ENCODE measurements at regions of chr3 and their contacts with region 1.

Region 1: GRCh38 chr3:11060500-11061251 is 68.1 kb downstream of the SLC6A1 start:
- DNase-seq: peak; percentile 38 to 80
- H3K4me3 ChIP-seq: peak overlapping the region; percentile 25 to 42
- H3K27ac ChIP-seq: no peak overlapping the region
- H3K4me1 ChIP-seq: peaks cover 0 to 10% (median 7%) of the 10 kb centered on the region in 4 donors
- H3K27me3 ChIP-seq: peaks cover 0 to 29% of the 10 kb centered on the region in 2 donors
- CTCF ChIP-seq: peak; percentile 89 to 90

Region 2: DNA sequence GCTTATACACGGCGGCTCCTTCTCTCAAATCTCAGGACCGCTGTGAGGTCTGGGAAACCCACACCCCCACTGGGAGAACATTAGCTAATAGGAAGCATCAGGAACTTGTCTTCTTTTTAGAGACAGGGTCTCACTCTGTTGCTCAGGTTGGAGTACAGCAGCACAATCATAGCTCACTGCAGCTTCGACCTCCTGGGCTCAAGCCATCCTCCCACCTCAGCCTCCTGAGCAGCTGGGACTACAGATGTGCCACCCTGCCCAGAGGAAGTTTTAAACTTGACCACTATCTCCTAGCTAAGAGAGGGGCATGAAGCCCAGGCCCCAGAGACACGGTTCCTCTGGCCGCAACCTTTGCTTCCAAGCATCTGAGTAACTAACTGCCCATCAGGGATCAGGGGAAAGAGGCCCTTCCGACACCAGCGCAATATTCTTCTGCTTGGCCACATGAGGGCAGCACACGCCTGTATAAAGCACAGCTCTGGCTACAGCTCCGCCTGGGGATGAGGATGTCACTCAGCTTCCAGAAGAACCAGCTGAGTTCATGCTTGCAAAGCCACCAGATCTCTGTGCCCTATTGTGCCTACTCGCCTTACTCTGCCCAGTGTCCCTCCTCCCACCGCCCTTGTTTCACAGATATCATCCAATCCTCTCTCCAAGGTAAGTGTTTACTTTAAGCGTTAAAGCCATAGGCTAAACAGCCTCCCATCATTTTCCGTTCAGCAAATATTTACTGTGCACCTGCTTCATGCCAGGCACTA is 302.2 kb before region 1 on chr3:
- intact Hi-C with region 1: loop called (anchors 10 kb)
- DNase-seq: peak in 1 of 2 donors; percentile 65
- H3K4me3 ChIP-seq: no peak overlapping the region
- H3K27ac ChIP-seq: no peak overlapping the region
- H3K4me1 ChIP-seq: no peaks in the 10 kb centered on the region
- H3K27me3 ChIP-seq: peaks cover 0 to 49% of the 10 kb centered on the region in 2 donors
- CTCF ChIP-seq: peak; percentile 51 to 60

Region 3: DNA sequence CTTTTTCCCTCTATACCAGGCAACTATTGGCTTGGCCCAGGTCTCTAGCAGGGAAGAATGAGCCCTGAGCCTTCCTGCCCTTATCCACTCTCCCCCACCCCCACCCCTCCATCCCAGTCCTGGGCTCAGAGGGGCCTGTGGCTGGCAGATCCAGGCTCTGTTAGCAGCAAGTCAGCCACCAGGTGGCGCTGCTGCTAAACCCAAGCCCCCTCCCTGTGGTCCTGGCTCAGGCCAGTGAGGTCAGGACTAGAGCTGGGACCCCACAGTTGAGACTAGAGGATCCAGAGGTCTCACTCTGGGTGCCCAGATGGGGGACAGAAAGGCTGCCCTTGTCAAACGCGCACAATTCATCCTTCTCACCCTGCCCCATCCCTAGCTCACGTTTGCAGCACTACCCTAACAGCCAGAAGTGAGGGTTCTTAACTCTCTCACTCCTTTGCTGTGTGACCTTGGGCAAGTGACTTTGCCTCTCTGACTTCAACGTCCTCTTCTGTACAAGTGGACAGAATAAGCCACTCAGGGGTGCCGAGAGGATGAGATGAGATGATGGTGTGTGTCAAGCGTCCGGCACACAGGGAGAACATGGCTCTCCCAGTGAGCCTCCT is 114.9 kb before region 1 on chr3:
- intact Hi-C with region 1: loop called (anchors 2 kb)
- DNase-seq: peak in 1 of 2 donors; percentile 38
- H3K4me3 ChIP-seq: no peak overlapping the region
- H3K27ac ChIP-seq: no peak overlapping the region
- H3K4me1 ChIP-seq: no peaks in the 10 kb centered on the region
- H3K27me3 ChIP-seq: peaks cover 0 to 3% of the 10 kb centered on the region in 2 donors
- CTCF ChIP-seq: peak; percentile 69 to 78

Region 4: GRCh38 chr3:11221818-11222415 is 161.2 kb after region 1 on chr3:
- intact Hi-C with region 1: loop called (anchors 5 kb)
- DNase-seq: no peak
- H3K4me3 ChIP-seq: no peak overlapping the region
- H3K27ac ChIP-seq: peak overlapping the region in 1 of 2 donors; percentile 13
- H3K4me1 ChIP-seq: peaks cover 0 to 42% (median 8%) of the 10 kb centered on the region in 4 donors
- H3K27me3 ChIP-seq: no peaks in the 10 kb centered on the region
- CTCF ChIP-seq: peak; percentile 27 to 44

Region 5: DNA sequence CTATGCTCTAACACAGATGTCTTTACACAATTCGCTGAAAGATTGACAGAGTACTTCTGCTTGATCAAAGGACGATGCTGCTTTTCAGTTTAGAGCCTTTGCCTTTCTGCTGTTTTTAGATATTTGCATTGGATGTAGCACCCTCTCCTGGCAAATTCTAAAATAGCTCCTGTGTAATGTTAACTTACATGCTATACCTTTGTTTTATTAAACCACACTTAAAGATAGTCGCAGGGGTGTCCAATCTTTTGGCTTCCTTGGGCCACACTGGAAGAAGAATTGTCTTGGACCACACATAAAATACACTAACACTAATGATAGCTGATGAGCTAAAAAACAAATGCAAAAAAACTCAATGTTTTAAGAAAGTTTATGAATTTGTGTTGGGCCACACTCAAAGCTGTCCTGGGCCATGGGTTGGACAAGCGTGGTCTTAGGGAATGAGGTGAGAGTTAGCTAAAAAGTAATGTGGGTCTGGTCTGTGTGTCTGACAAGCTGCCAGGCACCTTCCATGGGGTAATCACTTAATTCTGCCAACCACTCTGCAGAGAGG is 274.5 kb after region 1 on chr3:
- intact Hi-C with region 1: loop called (anchors 5 kb)
- DNase-seq: no peak
- H3K4me3 ChIP-seq: no peak overlapping the region
- H3K27ac ChIP-seq: no peak overlapping the region
- H3K4me1 ChIP-seq: no peaks in the 10 kb centered on the region
- H3K27me3 ChIP-seq: no peaks in the 10 kb centered on the region
- CTCF ChIP-seq: peak; percentile 72 to 86